ENCODE measurements at regions of chr4 and their contacts with region 1.

Region 1: GRCh38 chr4:177047070-177047850 is 254.5 kb upstream of the VEGFC start:
- DNase-seq: peak; percentile 76
- H3K4me3 ChIP-seq: no peak overlapping the region
- H3K27ac ChIP-seq: no peak overlapping the region
- H3K4me1 ChIP-seq: peaks cover 3% of the 10 kb centered on the region
- H3K27me3 ChIP-seq: no peaks in the 10 kb centered on the region
- CTCF ChIP-seq: peak; percentile 77 to 90
- POLR2A ChIP-seq: no peak

Region 2: DNA sequence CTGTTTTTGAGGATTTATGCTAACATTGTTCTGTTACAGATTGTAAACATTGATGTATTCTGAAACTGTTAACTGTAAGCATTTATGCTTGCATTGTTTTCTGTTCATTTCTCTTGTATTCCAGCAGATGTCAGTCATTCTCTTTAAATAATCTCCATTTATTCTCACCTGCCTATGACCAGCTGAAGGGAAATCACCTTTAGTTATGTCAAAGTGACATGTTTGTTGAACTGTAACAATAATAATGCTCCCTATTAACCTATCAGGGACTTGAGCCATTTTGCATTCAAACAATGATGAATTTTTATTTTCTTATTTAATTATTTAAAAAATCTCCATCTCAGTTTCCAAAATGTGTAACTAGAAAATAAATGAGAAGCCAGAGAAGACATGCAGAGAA is 669.5 kb before region 1 on chr4:
- CTCF ChIA-PET with region 1: interaction called, 232 read pairs
- POLR2A ChIA-PET with region 1: no interaction called
- dilution Hi-C with region 1: no loop called
- intact Hi-C with region 1: loop called (anchors 1 kb)
- DNase-seq: peak; percentile 39
- H3K4me3 ChIP-seq: no peak overlapping the region
- H3K27ac ChIP-seq: no peak overlapping the region
- H3K4me1 ChIP-seq: peaks cover under 1% of the 10 kb centered on the region
- H3K27me3 ChIP-seq: peaks cover 0 to 5% of the 10 kb centered on the region in 2 experiments
- CTCF ChIP-seq: peak in 1 of 2 donors; percentile 14
- POLR2A ChIP-seq: no peak

Region 3: GRCh38 chr4:176708771-176709311 is 338.4 kb before region 1 on chr4:
- CTCF ChIA-PET with region 1: interaction called, 14 read pairs
- POLR2A ChIA-PET with region 1: no interaction called
- dilution Hi-C with region 1: no loop called
- intact Hi-C with region 1: no loop called
- DNase-seq: peak; percentile 74
- H3K4me3 ChIP-seq: no peak overlapping the region
- H3K27ac ChIP-seq: peak overlapping the region; percentile 63
- H3K4me1 ChIP-seq: peaks cover 36% of the 10 kb centered on the region
- H3K27me3 ChIP-seq: no peaks in the 10 kb centered on the region
- CTCF ChIP-seq: no peak
- POLR2A ChIP-seq: no peak

Region 4: GRCh38 chr4:176805155-176805554 is 242.1 kb before region 1 on chr4:
- CTCF ChIA-PET with region 1: interaction called, 11 read pairs
- POLR2A ChIA-PET with region 1: no interaction called
- dilution Hi-C with region 1: no loop called
- intact Hi-C with region 1: no loop called
- DNase-seq: no peak
- H3K4me3 ChIP-seq: no peak overlapping the region
- H3K27ac ChIP-seq: no peak overlapping the region
- H3K4me1 ChIP-seq: peaks cover 8% of the 10 kb centered on the region
- H3K27me3 ChIP-seq: no peaks in the 10 kb centered on the region
- CTCF ChIP-seq: no peak
- POLR2A ChIP-seq: no peak

Region 5: GRCh38 chr4:176883681-176884418 is 163.4 kb before region 1 on chr4:
- CTCF ChIA-PET with region 1: interaction called, 28 read pairs
- POLR2A ChIA-PET with region 1: no interaction called
- dilution Hi-C with region 1: no loop called
- intact Hi-C with region 1: loop called (anchors 1 kb)
- DNase-seq: peak; percentile 76
- H3K4me3 ChIP-seq: peak overlapping the region in 1 of 3 experiments; percentile 33
- H3K27ac ChIP-seq: peak overlapping the region; percentile 86
- H3K4me1 ChIP-seq: peaks cover 35% of the 10 kb centered on the region
- H3K27me3 ChIP-seq: no peaks in the 10 kb centered on the region
- CTCF ChIP-seq: no peak
- POLR2A ChIP-seq: no peak

Region 6: GRCh38 chr4:176971576-176972115 is 75.6 kb before region 1 on chr4:
- CTCF ChIA-PET with region 1: interaction called, 19 read pairs
- POLR2A ChIA-PET with region 1: no interaction called
- dilution Hi-C with region 1: no loop called
- intact Hi-C with region 1: no loop called
- DNase-seq: peak; percentile 53
- H3K4me3 ChIP-seq: no peak overlapping the region
- H3K27ac ChIP-seq: no peak overlapping the region
- H3K4me1 ChIP-seq: no peaks in the 10 kb centered on the region
- H3K27me3 ChIP-seq: no peaks in the 10 kb centered on the region
- CTCF ChIP-seq: no peak
- POLR2A ChIP-seq: no peak

Region 7: DNA sequence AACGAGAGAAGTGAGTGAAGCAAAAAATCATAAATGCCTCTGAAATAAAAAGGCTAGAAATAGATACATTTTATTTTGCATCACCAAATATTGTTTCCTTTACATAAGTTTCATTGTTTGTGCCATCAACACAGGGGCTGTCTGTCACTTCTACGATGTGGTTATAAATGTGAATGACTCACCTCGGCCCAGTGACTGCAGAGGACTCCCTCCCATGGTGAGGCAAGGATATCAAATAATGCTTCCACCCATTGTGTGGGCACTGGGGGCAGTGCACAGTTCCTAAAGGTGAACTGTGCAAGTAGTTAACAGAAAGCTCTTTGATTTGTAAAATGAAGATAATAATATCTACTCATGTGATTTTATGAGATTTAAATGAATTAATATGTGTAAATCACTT is 32.1 kb after region 1 on chr4:
- CTCF ChIA-PET with region 1: interaction called, 11 read pairs
- POLR2A ChIA-PET with region 1: no interaction called
- dilution Hi-C with region 1: no loop called
- intact Hi-C with region 1: no loop called
- DNase-seq: no peak
- H3K4me3 ChIP-seq: no peak overlapping the region
- H3K27ac ChIP-seq: no peak overlapping the region
- H3K4me1 ChIP-seq: no peaks in the 10 kb centered on the region
- H3K27me3 ChIP-seq: no peaks in the 10 kb centered on the region
- CTCF ChIP-seq: no peak
- POLR2A ChIP-seq: no peak